Mammary epithelial cell (primary cell): ENCODE measurements at regions of chr4 and their contacts with region 1.

Region 1: GRCh38 chr4:25234390-25235370 is 847 bp downstream of the PI4K2B start:
- DNase-seq: peak; percentile 97
- H3K4me3 ChIP-seq: peak overlapping the region; percentile 87 to 98 (median 91)
- H3K27ac ChIP-seq: peak overlapping the region; percentile 94
- H3K4me1 ChIP-seq: peaks cover 4% of the 10 kb centered on the region
- H3K27me3 ChIP-seq: no peaks in the 10 kb centered on the region
- CTCF ChIP-seq: peak; percentile 44 to 55

Region 2: GRCh38 chr4:24753500-24753899 is 481.2 kb before region 1 on chr4:
- CTCF ChIA-PET with region 1: no interaction called
- dilution Hi-C with region 1: no loop called
- in situ Hi-C with region 1: no loop called
- intact Hi-C with region 1: loop called (anchors 10 kb)
- DNase-seq: peak; percentile 100
- H3K4me3 ChIP-seq: no peak overlapping the region
- H3K27ac ChIP-seq: peak overlapping the region; percentile 64
- H3K4me1 ChIP-seq: peaks cover 17% of the 10 kb centered on the region
- H3K27me3 ChIP-seq: no peaks in the 10 kb centered on the region
- CTCF ChIP-seq: no peak

Region 3: DNA sequence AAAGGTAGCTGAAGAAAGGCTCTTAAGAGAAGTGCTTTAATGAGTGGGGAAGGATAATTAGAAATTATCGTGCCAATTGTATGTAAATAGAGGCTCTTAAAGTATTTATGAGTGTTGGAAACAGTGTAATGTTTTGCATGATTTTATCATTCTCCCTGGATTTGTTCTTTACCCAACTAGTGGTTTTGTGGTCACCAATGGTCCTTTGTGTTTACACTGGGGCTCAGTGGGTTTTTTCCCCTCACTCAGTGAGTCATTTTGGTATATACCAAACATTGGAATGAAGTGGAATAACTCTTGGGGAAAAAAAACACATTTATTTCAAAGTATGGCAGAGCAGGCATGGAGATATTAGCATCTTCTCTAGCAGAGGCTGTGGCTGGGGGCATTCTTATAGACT is 183.1 kb before region 1 on chr4:
- CTCF ChIA-PET with region 1: no interaction called
- dilution Hi-C with region 1: no loop called
- in situ Hi-C with region 1: no loop called
- intact Hi-C with region 1: no loop called
- DNase-seq: no peak
- H3K4me3 ChIP-seq: no peak overlapping the region
- H3K27ac ChIP-seq: no peak overlapping the region
- H3K4me1 ChIP-seq: no peaks in the 10 kb centered on the region
- H3K27me3 ChIP-seq: peaks cover 6% of the 10 kb centered on the region
- CTCF ChIP-seq: no peak

Region 4: GRCh38 chr4:25159884-25160713 is 74.6 kb before region 1 on chr4 and contains the start of gene SEPSECS:
- CTCF ChIA-PET with region 1: no interaction called
- dilution Hi-C with region 1: no loop called
- in situ Hi-C with region 1: no loop called
- intact Hi-C with region 1: loop called (anchors 1 kb)
- DNase-seq: peak; percentile 96
- H3K4me3 ChIP-seq: peak within 1 kb of the TSS; percentile 71 to 96 (median 91)
- H3K27ac ChIP-seq: peak within 1 kb of the TSS; percentile 83
- H3K4me1 ChIP-seq: peaks cover 24% of the 10 kb centered on the region
- H3K27me3 ChIP-seq: no peaks in the 10 kb centered on the region
- CTCF ChIP-seq: no peak
- total RNA-seq, gene SEPSECS: 7.8 to 8.8 TPM

Region 5: DNA sequence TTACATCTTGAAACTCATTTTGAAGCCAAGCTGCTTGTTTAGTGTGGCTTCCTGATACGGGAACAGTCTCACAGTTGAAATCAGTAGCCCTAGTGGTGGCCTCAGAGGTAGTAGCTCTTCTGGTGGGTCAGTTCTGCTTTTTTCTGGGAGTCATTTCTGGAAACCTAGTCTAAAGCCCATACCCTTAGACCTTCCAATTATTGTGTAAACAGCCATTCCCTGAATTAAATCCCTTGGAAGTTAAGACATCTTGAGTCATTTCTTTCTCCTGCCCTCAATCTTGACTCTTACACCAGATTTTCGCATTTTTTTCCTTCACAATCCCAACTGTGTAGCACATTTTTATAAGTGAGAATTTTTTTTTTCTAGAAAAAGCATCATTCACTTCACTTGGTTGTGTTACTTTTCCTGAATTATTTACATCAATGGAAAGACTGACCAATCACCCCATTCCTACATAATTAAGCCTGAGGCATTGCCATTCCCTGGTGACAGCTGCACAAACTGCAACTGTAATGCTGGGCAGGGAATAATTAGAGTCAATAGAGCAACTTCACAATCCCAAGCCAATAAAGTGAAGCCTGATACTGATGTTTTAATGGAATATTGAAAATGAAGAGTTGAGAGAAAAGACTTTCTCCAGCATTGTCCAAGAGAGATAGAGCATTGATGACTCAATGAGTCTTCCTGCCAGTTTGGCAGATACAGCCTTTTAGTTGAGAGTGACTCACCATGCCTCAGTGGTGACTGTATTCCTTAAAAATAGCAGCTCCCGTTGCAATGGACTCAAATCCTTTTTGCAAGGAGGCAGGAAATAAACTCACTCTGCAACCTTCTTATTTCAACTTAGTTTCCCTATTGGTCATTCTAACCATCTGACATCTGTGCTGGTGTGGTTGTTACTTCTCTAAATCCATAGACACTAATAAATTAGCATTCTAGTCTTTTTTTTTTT is 61.4 kb before region 1 on chr4:
- CTCF ChIA-PET with region 1: interaction called, 3 read pairs
- dilution Hi-C with region 1: no loop called
- in situ Hi-C with region 1: no loop called
- intact Hi-C with region 1: loop called (anchors 2 kb)
- DNase-seq: peak; percentile 96
- H3K4me3 ChIP-seq: no peak overlapping the region
- H3K27ac ChIP-seq: peak overlapping the region; percentile 35
- H3K4me1 ChIP-seq: peaks cover 26% of the 10 kb centered on the region
- H3K27me3 ChIP-seq: no peaks in the 10 kb centered on the region
- CTCF ChIP-seq: no peak

Region 6: GRCh38 chr4:25184056-25184455 is 50.6 kb before region 1 on chr4:
- CTCF ChIA-PET with region 1: no interaction called
- dilution Hi-C with region 1: no loop called
- in situ Hi-C with region 1: no loop called
- intact Hi-C with region 1: no loop called
- DNase-seq: no peak
- H3K4me3 ChIP-seq: no peak overlapping the region
- H3K27ac ChIP-seq: no peak overlapping the region
- H3K4me1 ChIP-seq: no peaks in the 10 kb centered on the region
- H3K27me3 ChIP-seq: no peaks in the 10 kb centered on the region
- CTCF ChIP-seq: no peak

Region 7: GRCh38 chr4:25258981-25259578 is 24.4 kb after region 1 on chr4:
- CTCF ChIA-PET with region 1: interaction called, 12 read pairs
- dilution Hi-C with region 1: no loop called
- in situ Hi-C with region 1: no loop called
- intact Hi-C with region 1: no loop called
- DNase-seq: peak; percentile 43
- H3K4me3 ChIP-seq: no peak overlapping the region
- H3K27ac ChIP-seq: no peak overlapping the region
- H3K4me1 ChIP-seq: peaks cover 7% of the 10 kb centered on the region
- H3K27me3 ChIP-seq: no peaks in the 10 kb centered on the region
- CTCF ChIP-seq: no peak

Region 8: DNA sequence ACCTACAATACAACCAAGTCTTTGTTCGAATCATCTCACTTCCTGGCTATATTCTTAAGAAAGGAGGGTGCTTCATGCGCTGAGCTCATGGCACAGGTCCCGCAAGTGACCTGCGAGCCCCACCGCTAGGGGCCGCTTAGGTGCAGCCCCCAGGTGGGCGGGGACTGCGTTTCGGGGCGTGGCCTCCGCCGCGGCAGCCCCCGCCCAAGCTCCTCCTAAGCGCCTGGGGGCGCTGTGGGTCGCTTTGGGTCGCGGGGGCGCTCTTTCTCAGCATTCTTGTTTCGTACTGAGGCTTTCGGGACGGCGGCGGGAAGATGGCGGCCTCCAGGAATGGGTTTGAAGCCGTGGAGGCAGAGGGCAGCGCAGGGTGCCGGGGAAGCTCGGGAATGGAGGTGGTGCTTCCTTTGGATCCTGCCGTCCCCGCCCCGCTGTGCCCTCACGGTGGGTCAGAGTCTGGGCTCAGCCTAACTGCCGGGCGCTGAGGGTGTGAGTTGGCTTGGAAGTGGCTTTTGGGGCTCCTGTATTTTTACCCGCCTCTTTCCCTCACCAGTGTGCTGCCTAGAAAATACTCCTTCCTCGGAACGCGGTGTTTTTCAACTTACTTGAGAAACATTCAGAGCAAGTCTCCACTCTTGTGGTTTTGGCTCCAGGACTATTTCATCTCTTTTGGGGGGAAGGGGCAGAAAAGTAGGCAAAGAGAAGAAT is 78.0 kb after region 1 on chr4 and contains the start of gene ZCCHC4:
- CTCF ChIA-PET with region 1: no interaction called
- dilution Hi-C with region 1: no loop called
- in situ Hi-C with region 1: no loop called
- intact Hi-C with region 1: loop called (anchors 2 kb)
- DNase-seq: peak; percentile 87
- H3K4me3 ChIP-seq: peak within 1 kb of the TSS; percentile 65 to 91 (median 84)
- H3K27ac ChIP-seq: peak within 1 kb of the TSS; percentile 67
- H3K4me1 ChIP-seq: peaks cover 7% of the 10 kb centered on the region
- H3K27me3 ChIP-seq: peaks cover under 1% of the 10 kb centered on the region
- CTCF ChIP-seq: peak; percentile 95 to 99
- total RNA-seq, gene ZCCHC4: 10.2 to 13.0 TPM

Region 9: DNA sequence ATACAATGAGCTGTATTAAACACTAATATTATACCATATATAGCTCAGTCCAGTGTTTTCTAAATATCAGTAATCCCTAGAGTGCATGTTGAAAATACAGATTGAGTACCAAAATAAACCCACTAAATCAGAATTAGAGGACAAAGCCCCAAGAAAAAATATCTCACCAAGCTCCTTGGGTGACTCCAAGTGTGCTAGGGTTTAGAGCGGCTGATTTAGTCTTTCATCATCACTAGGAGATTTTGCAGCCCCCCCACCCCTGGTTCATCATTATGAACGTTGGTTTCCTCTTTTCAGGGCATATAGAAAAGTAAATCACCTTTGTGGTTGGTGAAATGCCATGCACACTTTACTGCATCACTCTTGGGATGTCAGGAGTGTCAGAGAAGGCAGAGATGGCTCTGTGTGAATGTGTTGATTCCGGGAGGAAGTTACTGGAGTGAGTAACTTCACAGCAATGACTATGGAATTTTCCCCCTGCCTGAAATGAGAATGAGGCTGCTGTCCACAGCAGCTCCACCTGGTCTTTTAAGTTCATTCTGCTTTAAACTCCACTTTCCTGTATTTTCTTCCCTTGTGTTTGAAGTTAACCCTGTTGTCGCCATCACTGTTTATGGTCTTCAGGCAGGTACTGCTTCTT is 117.2 kb after region 1 on chr4:
- CTCF ChIA-PET with region 1: no interaction called
- dilution Hi-C with region 1: no loop called
- in situ Hi-C with region 1: no loop called
- intact Hi-C with region 1: no loop called
- DNase-seq: peak; percentile 42
- H3K4me3 ChIP-seq: no peak overlapping the region
- H3K27ac ChIP-seq: no peak overlapping the region
- H3K4me1 ChIP-seq: peaks cover 7% of the 10 kb centered on the region
- H3K27me3 ChIP-seq: no peaks in the 10 kb centered on the region
- CTCF ChIP-seq: no peak

Region 10: GRCh38 chr4:25367004-25367621 is 132.4 kb after region 1 on chr4:
- CTCF ChIA-PET with region 1: no interaction called
- dilution Hi-C with region 1: no loop called
- in situ Hi-C with region 1: no loop called
- intact Hi-C with region 1: loop called (anchors 2 kb)
- DNase-seq: peak; percentile 9
- H3K4me3 ChIP-seq: no peak overlapping the region
- H3K27ac ChIP-seq: no peak overlapping the region
- H3K4me1 ChIP-seq: no peaks in the 10 kb centered on the region
- H3K27me3 ChIP-seq: no peaks in the 10 kb centered on the region
- CTCF ChIP-seq: peak; percentile 59 to 62